ENCODE measurements at regions of chr4 and their contacts with region 1.

Region 1: DNA sequence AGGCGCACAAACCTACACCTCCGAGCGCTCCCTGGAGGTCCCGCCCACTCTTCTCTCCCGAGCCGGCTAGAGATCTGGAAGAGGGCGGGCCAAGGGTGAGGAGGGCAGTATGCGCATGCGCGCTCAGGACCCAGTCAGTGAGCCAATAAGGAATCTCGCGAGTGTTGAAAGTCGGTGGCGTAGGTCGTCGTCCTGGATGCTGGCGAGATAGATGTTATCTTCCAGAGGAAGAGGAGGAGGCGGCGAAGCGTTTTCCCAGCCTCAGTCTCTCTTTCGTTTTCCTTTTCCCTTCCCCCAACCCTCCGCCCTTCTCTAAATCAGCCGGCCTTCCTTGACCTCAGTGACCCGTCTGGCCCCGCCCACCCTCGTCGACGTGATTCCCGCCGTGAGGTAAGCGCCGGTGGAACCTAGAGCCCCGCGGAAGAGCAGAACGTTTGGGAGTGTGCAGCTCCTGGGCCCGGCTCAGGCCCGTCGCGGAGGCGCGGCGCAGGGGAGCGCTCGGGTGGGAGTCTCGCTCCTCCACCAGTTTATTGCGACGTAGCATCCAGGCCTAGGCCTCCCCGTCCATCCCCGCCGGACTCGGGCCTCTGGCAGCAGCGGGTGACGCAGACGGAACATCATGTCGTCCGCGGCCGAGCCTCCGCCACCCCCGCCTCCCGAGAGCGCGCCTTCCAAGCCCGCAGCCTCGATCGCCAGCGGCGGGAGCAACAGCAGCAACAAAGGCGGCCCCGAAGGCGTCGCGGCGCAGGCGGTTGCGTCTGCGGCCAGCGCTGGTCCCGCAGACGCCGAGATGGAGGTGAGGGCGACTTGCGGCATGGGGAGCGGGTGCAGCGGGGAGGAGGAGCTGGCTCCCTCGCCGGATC is at the start of gene SMARCA5:
- DNase-seq: peak; percentile 88 to 100 (median 94)
- ATAC-seq: peak; percentile 86
- H3K4me3 ChIP-seq: peak within 1 kb of the TSS; percentile 91
- H3K4me3 Mint-ChIP-seq: peak within 1 kb of the TSS; percentile 98
- H3K27ac ChIP-seq: peak within 1 kb of the TSS; percentile 98 to 99
- H3K27ac Mint-ChIP-seq: peak within 1 kb of the TSS; percentile 99
- H3K4me1 ChIP-seq: peaks cover 14% of the 10 kb centered on the region
- H3K4me1 Mint-ChIP-seq: peaks cover 37% of the 10 kb centered on the region
- H3K27me3 ChIP-seq: peaks cover 0 to 3% of the 10 kb centered on the region in 2 experiments
- H3K27me3 Mint-ChIP-seq: no peaks in the 10 kb centered on the region
- CTCF ChIP-seq: no peak
- total RNA-seq, gene SMARCA5: 64.2 to 64.4 TPM

Region 2: DNA sequence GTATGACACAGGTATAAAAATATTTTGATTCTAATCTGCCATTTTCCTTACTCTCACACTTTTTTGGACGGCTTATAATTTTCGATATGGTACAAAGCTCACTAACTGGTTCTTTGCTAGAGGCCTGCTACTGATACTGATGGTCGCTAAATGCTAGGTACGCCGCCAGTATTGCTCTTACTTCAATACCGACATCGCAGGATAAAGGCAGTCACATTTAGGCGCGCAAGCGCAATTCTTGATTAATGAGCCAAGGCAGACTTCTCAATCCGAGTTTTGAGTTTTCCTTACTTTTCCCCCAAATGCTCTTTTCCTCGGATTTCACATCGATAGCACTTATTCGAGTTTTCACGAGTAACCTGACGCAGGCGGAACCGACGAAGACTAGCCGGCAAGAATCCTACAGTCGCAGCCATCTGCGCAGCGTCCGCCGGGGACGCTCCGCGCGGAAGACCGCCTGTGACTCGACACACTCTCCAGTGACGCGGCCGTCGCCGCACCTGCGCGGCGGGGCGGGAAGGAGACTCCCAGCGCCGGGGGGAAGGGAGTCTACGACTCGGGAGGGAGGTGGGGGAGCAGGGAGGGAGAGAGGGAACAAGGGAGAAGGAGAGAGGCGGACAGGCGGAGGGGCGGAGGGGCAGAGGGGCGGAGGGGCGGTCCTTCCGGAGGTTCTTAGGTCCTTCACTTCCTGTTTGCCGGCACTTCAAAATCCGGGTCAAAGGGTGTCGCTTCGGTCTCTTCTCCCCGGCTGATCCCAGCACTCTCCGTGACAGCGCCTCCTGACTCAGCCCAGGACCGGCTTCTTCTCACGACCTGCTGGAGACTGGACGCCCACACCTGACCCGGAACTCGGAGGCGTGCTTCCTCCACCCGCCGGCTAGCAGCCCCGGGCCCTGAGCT is 329.1 kb before region 1 on chr4 and contains the start of gene USP38:
- CTCF ChIA-PET with region 1: no interaction called
- POLR2A ChIA-PET with region 1: no interaction called
- intact Hi-C with region 1: loop called (anchors 2 kb)
- DNase-seq: peak; percentile 73 to 96 (median 80)
- ATAC-seq: peak; percentile 84
- H3K4me3 ChIP-seq: peak within 1 kb of the TSS; percentile 70
- H3K4me3 Mint-ChIP-seq: peak within 1 kb of the TSS; percentile 91
- H3K27ac ChIP-seq: peak within 1 kb of the TSS; percentile 93 to 97
- H3K27ac Mint-ChIP-seq: peak within 1 kb of the TSS; percentile 97
- H3K4me1 ChIP-seq: peaks cover 7% of the 10 kb centered on the region
- H3K4me1 Mint-ChIP-seq: peaks cover 75% of the 10 kb centered on the region
- H3K27me3 ChIP-seq: no peaks in the 10 kb centered on the region
- H3K27me3 Mint-ChIP-seq: no peaks in the 10 kb centered on the region
- CTCF ChIP-seq: no peak
- total RNA-seq, gene USP38: 34.2 to 35.7 TPM

Region 3: DNA sequence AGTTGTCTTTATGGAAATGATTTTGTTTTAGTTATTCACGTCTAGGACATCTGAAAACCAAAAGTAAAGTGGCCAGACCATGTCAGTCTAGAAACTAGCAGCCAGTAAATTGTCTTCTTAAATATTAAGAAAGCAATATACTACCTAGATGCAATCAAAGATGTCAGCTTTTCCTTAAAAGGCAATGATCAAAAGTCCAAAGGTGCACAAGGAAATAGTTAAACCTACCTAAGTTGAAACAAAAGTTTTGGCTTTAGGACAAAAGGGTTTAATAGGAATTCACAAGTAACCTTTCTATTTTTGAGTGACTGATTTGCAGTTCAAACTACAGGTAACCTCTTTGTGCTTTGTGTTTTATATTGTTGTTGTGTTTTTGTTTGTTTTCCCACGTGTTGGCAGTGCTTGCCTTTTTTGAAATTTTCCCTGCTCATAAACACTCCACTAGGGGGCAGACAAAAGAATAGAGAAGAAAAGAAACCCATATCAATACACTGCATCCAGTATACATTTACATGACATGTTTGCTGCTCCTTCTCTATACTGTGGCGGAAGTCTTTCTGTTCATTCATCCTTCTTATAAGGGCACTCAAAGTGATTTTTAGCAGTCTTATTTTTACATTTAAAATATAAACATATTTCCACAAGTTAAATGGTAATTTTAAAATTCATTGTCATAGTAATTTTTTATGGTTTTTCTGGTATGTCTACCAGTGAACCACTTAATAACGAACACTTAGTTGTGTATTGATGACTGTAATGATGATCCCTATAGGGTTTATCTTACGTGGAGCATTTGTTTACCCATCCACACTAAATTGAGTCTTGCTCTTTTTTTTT is 114.2 kb before region 1 on chr4:
- CTCF ChIA-PET with region 1: no interaction called
- POLR2A ChIA-PET with region 1: no interaction called
- intact Hi-C with region 1: loop called in 1 of 2 experiments (anchors 2 kb)
- DNase-seq: peak in 3 of 14 experiments; percentile 45 to 49 (median 47)
- ATAC-seq: no peak
- H3K4me3 ChIP-seq: no peak overlapping the region
- H3K4me3 Mint-ChIP-seq: no peak overlapping the region
- H3K27ac ChIP-seq: no peak overlapping the region
- H3K27ac Mint-ChIP-seq: no peak overlapping the region
- H3K4me1 ChIP-seq: no peaks in the 10 kb centered on the region
- H3K4me1 Mint-ChIP-seq: peaks cover 9% of the 10 kb centered on the region
- H3K27me3 ChIP-seq: peaks cover 0 to 9% of the 10 kb centered on the region in 2 experiments
- H3K27me3 Mint-ChIP-seq: peaks cover 5% of the 10 kb centered on the region
- CTCF ChIP-seq: peak; percentile 69

Region 4: GRCh38 chr4:143531380-143531779 is 17.8 kb after region 1 on chr4:
- CTCF ChIA-PET with region 1: no interaction called
- POLR2A ChIA-PET with region 1: interaction called, 7 read pairs
- intact Hi-C with region 1: loop called in 1 of 2 experiments (anchors 2 kb)
- DNase-seq: no peak
- ATAC-seq: no peak
- H3K4me3 ChIP-seq: no peak overlapping the region
- H3K4me3 Mint-ChIP-seq: no peak overlapping the region
- H3K27ac ChIP-seq: no peak overlapping the region
- H3K27ac Mint-ChIP-seq: no peak overlapping the region
- H3K4me1 ChIP-seq: no peaks in the 10 kb centered on the region
- H3K4me1 Mint-ChIP-seq: peaks cover 39% of the 10 kb centered on the region
- H3K27me3 ChIP-seq: no peaks in the 10 kb centered on the region
- H3K27me3 Mint-ChIP-seq: no peaks in the 10 kb centered on the region
- CTCF ChIP-seq: no peak

Region 5: DNA sequence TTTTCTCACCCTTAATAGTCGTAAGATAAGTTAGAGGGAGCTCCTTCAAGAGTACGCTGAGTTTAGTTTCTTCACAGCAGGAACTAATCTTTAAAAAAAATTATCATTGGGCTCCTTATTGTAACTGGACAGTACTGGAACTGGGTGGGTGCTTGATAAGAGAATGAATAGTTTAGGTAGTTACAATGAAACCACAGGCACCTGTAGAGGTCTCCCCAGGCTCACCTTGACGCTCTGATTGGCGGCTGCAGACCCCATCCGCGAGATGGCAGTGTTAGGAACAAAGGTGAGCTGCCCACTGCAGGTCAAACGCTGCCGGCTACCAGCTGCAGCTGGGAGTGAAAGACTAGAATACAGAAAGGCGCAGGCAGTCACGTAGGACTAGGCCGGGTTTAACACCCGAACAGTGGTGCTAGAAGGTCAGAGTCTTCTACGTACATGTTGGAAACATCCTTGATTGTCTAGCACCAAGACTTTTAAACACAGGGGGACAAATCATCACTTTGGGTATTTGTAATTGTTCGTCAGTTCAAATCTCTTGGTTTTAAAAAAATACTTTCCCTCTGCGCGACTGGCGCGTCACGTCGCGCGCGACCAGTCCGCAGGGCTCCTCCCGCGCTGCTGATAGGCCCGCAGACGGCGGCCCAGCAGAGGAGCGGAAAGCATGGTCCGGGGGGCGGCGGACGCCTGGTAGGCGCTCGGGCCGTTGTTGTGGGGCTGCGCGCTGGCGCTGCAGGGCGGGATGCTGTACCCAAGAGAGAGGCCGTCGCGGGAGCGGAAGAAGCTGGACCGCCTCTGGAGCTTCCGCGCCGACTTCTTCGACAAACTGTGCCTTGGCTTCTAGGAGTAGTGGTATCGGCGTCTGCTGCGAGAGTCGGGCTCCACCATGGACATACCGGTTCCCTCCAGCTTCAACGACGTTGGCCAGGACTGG is 45.6 kb after region 1 on chr4:
- CTCF ChIA-PET with region 1: interaction called, 11 read pairs
- POLR2A ChIA-PET with region 1: interaction called, 12 read pairs
- intact Hi-C with region 1: loop called (anchors 5 kb)
- DNase-seq: peak; percentile 46 to 90 (median 66)
- ATAC-seq: peak; percentile 83
- H3K4me3 ChIP-seq: peak overlapping the region; percentile 72
- H3K4me3 Mint-ChIP-seq: peak overlapping the region; percentile 96
- H3K27ac ChIP-seq: peak overlapping the region; percentile 22 to 42
- H3K27ac Mint-ChIP-seq: peak overlapping the region; percentile 85
- H3K4me1 ChIP-seq: peaks cover 11% of the 10 kb centered on the region
- H3K4me1 Mint-ChIP-seq: peaks cover 25% of the 10 kb centered on the region
- H3K27me3 ChIP-seq: no peaks in the 10 kb centered on the region
- H3K27me3 Mint-ChIP-seq: no peaks in the 10 kb centered on the region
- CTCF ChIP-seq: peak; percentile 77

Region 6: DNA sequence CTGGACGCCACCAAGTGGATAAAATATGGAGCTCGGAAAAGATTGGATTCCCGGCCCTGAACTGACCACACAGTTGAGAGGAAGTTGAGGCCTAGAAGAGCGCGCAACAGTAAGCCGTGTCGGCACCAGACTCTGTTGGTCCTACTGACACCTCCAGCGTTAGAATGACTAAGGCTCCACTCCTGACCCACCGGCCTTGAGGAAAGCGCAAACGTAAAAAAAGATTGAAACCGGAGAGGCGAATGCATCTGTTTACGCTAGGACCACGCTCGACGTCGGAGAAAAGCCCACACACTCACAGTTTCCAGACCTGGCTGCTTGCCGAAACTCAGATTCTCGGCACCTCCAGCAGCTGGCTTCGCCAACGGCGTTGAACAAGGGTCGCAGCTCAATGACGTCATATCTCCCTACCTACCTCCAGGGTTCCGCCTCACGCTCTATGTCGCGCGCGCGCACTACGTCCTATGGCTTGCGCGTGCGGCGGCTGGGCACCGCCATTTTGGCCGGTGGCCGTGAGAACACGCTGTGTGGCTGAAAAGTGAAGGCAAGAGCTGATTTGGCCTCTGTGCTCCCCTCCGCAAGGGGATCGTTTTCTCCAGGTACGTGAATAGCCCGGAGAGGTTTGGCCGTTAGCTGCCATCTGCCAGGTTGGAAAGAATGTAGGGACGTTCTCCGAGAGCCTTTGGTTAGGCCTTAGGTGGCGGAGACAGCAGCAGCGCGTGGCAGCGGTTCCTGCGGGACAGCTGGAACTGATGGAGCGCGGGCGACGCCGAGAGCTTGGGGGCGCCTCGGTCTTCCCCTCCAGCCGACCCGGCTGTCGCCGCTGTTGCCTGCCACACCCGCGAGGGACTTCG is 1584.5 kb after region 1 on chr4 and contains the starts of genes ABCE1 and ANAPC10:
- CTCF ChIA-PET with region 1: no interaction called
- POLR2A ChIA-PET with region 1: no interaction called
- intact Hi-C with region 1: loop called in 1 of 2 experiments (anchors 5 kb)
- DNase-seq: peak; percentile 88 to 100 (median 93)
- ATAC-seq: peak; percentile 89
- H3K4me3 ChIP-seq: peak within 1 kb of the TSS; percentile 93
- H3K4me3 Mint-ChIP-seq: peak within 1 kb of the TSS; percentile 95
- H3K27ac ChIP-seq: peak within 1 kb of the TSS; percentile 76 to 90
- H3K27ac Mint-ChIP-seq: peak within 1 kb of the TSS; percentile 99
- H3K4me1 ChIP-seq: peaks cover 23% of the 10 kb centered on the region
- H3K4me1 Mint-ChIP-seq: peaks cover 48% of the 10 kb centered on the region
- H3K27me3 ChIP-seq: no peaks in the 10 kb centered on the region
- H3K27me3 Mint-ChIP-seq: no peaks in the 10 kb centered on the region
- CTCF ChIP-seq: no peak
- total RNA-seq, gene ABCE1: 50.1 to 50.6 TPM
- total RNA-seq, gene ANAPC10: 25.8 to 27.5 TPM